Breast epithelium (tissue), 4 donors: ENCODE measurements at regions of chr4 and their contacts with region 1.

Region 1: DNA sequence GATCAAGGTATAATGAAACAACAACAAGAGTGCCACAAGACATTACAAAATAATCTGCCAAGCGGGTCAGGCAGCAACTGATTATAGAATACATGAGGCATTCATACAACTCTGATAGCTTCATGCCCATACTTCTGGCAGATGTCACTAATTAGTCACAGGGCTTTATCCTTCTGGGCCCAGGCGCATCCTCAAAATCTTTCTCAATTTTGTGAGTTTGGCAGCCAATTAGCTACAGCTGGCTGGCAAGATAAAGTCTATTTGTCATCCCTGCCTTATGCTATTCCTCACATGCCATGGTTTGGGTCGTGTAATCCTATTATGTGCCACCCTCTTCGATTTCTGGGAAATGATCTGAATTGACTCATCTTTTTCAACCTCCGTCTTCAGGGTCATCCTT is 254.3 kb downstream of the PACRGL start:
- DNase-seq: no peak
- H3K4me3 ChIP-seq: no peak overlapping the region
- H3K27ac ChIP-seq: no peak overlapping the region
- H3K4me1 ChIP-seq: no peaks in the 10 kb centered on the region
- H3K27me3 ChIP-seq: no peaks in the 10 kb centered on the region
- CTCF ChIP-seq: no peak
- POLR2A ChIP-seq: no peak

Region 2: DNA sequence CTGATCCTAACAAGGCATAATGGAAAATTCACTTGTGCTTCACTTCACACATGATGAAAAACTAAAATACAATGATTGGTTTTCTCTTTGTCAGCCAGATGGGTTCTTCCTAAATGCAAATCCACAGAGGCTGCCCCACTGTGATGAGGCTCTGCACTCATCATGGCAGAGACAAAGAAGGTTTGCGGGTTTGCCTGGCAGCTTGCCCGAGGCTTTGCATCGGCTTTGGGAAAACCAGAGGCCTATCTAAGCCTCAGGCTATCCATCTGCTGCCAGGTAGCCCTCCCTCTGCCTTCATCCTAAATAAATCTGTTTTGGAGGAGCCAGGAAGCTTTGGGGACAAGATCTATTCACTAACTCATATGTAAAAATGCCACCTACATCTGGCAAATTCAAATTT is 10.1 kb before region 1 on chr4:
- intact Hi-C with region 1: loop called (anchors 1 kb)
- DNase-seq: no peak
- H3K4me3 ChIP-seq: no peak overlapping the region
- H3K27ac ChIP-seq: no peak overlapping the region
- H3K4me1 ChIP-seq: no peaks in the 10 kb centered on the region
- H3K27me3 ChIP-seq: no peaks in the 10 kb centered on the region
- CTCF ChIP-seq: no peak
- POLR2A ChIP-seq: no peak